ENCODE measurements at regions of chr21 and their contacts with region 1.

Region 1: GRCh38 chr21:23968722-23969647 is 1638.3 kb downstream of the MRPL39 start:
- DNase-seq: peak; percentile 81
- H3K4me3 Mint-ChIP-seq: peak overlapping the region; percentile 56
- H3K27ac Mint-ChIP-seq: peak overlapping the region; percentile 80
- H3K4me1 Mint-ChIP-seq: peaks cover 27% of the 10 kb centered on the region
- H3K27me3 Mint-ChIP-seq: peaks cover 4% of the 10 kb centered on the region

Region 2: DNA sequence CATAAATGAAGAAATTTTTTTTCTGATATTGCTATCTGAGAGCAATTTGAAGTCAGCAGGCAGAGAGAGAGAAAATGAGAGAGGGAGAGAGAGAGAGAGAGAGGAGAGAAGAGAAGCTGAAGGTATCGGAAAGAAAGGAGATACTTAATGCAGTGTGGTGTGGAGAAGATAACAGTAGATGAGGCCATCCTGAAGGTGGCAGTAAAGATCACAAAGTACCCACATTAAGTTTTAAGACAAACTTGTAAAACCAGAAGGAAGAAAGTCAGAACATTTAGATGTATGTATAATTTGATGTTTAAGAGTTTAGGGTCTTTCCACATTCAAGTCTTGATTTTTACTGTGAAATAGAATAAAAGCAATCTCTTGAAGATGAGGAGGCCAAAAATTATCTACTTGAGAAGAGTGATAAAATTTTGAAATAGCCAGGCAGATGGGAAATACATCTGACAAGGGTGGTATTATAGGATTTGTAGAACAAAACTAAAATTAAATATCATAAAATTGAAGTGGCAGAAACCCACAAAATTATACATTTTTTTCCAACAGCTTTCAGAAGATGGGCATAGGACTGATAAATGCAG is 115.1 kb before region 1 on chr21:
- intact Hi-C with region 1: loop called (anchors 1 kb)
- DNase-seq: no peak
- H3K4me3 Mint-ChIP-seq: no peak overlapping the region
- H3K27ac Mint-ChIP-seq: no peak overlapping the region
- H3K4me1 Mint-ChIP-seq: peaks cover 5% of the 10 kb centered on the region
- H3K27me3 Mint-ChIP-seq: peaks cover 8% of the 10 kb centered on the region

Region 3: DNA sequence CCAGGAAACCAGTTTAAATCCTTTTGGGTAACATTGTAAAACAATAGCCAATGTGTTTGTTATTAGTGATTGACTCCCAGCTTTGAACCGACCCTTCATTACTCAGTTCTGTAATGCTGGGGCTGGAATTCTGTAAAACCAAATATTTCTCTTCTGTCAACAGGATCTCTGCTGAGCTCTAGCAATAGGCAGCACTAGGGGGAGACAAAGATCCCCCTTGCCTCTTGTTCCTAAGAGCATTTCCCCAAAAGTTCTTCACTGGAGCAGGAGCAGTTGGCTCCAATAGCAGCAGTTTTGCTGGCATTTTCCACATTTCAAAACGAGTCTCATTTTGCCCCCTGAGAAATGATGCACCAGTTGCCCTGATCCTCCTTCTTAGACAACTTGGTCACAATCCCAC is 32.8 kb before region 1 on chr21:
- intact Hi-C with region 1: loop called (anchors 2 kb)
- DNase-seq: no peak
- H3K4me3 Mint-ChIP-seq: no peak overlapping the region
- H3K27ac Mint-ChIP-seq: no peak overlapping the region
- H3K4me1 Mint-ChIP-seq: no peaks in the 10 kb centered on the region
- H3K27me3 Mint-ChIP-seq: peaks cover 8% of the 10 kb centered on the region